Dendritic cell treated with granulocyte-macrophage colony-stimulating factor and Interleukin-4, amounts not matched to agents 40 ng/mL and 50 ng/mL, for 4 days (primary cell): ENCODE measurements at regions of chr11 and their contacts with region 1.

Region 1: GRCh38 chr11:124586238-124586860 is 16.6 kb downstream of the OR8A1 start:
- H3K4me3 Mint-ChIP-seq: no peak overlapping the region
- H3K27ac Mint-ChIP-seq: no peak overlapping the region
- H3K4me1 Mint-ChIP-seq: no peaks in the 10 kb centered on the region
- H3K27me3 Mint-ChIP-seq: peaks cover 13% of the 10 kb centered on the region

Region 2: DNA sequence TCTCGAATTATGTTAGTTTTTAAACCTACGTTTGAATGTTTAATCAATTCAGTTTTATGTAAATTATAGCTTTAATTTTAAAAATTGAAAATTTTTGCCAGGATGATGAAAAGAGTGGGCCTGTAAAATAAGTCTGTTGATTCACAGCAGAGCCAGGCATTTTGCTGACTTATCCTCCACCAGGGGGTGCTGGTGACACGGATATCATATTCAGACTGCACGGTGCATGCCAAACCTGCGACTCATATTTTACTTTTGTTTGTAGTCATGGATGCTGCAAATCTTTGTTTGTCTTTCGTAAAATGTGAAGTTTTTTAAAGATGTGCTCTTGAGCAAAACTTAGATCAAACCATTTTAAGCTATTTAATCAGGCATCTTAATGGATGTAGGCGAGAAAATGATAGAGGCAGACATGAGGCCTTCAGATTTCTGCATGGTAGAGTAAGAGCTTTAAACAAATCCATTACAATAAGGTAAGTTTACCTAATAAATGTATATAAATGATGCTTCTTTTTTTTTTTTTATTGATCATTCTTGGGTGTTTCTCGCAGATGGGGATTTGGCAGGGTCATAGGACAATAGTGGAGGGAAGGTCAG is 183.9 kb before region 1 on chr11:
- intact Hi-C with region 1: loop called (anchors 1 kb)
- H3K4me3 Mint-ChIP-seq: no peak overlapping the region
- H3K27ac Mint-ChIP-seq: no peak overlapping the region
- H3K4me1 Mint-ChIP-seq: no peaks in the 10 kb centered on the region
- H3K27me3 Mint-ChIP-seq: peaks cover 7% of the 10 kb centered on the region

Region 3: GRCh38 chr11:124415356-124415923 is 170.9 kb before region 1 on chr11:
- intact Hi-C with region 1: loop called (anchors 1 kb)
- H3K4me3 Mint-ChIP-seq: no peak overlapping the region
- H3K27ac Mint-ChIP-seq: no peak overlapping the region
- H3K4me1 Mint-ChIP-seq: no peaks in the 10 kb centered on the region
- H3K27me3 Mint-ChIP-seq: peaks cover 15% of the 10 kb centered on the region